ENCODE measurements at regions of chr18 and their contacts with region 1.

Region 1: GRCh38 chr18:3062798-3063680 is 50.1 kb upstream of the LPIN2 start:
- DNase-seq: peak; percentile 83
- H3K4me3 Mint-ChIP-seq: peak overlapping the region; percentile 70
- H3K27ac Mint-ChIP-seq: peak overlapping the region; percentile 91
- H3K4me1 Mint-ChIP-seq: peaks cover 67% of the 10 kb centered on the region
- H3K27me3 Mint-ChIP-seq: no peaks in the 10 kb centered on the region

Region 2: DNA sequence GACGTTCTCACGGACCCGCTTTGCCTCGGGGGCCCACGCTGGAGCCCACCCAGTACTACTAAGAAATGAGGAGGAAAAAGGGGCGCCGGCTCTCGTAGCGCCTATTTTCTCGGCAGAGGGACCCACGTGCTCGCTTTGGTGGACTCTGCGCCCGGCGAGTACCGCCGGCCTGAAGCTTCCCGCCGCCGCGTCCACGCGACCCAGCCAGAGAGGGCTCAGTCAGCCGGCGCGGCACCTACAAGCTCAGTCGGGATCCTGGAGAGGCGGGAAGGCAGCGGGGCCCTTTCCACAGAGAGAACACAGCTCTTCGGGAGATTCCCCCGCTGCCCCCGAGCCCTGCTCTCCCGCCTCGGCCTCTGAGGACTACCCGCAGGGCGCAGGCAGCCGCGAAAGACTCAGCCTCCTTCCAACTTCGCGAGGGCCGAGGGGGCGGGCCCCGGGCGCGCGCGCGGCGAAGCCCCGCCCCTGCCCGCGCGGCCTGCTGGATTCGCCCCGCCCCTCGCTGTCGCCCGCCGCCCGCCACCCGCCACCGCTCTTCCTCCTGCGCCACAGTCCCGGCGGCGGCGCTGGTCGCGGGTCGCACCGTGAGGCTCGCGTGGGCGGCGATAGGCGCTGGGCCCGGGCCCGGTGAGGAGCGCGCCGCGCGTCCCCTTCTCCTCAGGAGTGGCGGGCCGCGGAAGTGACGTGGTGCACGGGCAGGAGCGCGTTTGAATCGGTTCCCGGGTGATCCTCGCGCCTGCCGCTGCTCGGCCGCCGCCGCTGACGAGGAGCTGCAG is 407.7 kb before region 1 on chr18 and contains the start of gene SMCHD1:
- CTCF ChIA-PET with region 1: no interaction called
- POLR2A ChIA-PET with region 1: interaction called, 10 read pairs
- DNase-seq: peak; percentile 87
- H3K4me3 Mint-ChIP-seq: peak within 1 kb of the TSS; percentile 95
- H3K27ac Mint-ChIP-seq: peak within 1 kb of the TSS; percentile 96
- H3K4me1 Mint-ChIP-seq: peaks cover 26% of the 10 kb centered on the region
- H3K27me3 Mint-ChIP-seq: peaks cover 1% of the 10 kb centered on the region
- total RNA-seq, gene SMCHD1: 162 TPM

Region 3: DNA sequence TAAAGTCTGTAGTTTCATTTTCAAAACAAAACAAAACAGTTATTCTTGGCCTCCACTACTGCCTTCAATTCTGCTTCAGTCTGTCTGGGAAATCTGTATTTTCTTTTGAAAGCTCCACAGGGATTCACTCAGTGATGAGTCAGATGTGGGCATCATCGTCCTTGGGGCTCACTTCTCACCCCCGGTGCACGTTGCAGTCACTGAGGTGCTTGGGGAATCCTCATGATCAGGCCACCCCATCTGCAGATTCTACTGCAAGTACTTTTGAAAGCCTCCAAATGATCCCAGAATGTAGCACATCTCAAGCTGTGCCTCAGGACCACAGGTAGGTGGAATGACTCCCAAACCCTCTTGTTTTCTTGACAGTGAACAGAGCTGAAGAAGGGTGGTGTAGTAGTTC is 84.4 kb before region 1 on chr18:
- CTCF ChIA-PET with region 1: interaction called, 94 read pairs
- POLR2A ChIA-PET with region 1: interaction called, 19 read pairs
- DNase-seq: no peak
- H3K4me3 Mint-ChIP-seq: peak overlapping the region; percentile 63
- H3K27ac Mint-ChIP-seq: peak overlapping the region; percentile 78
- H3K4me1 Mint-ChIP-seq: peaks cover 83% of the 10 kb centered on the region
- H3K27me3 Mint-ChIP-seq: no peaks in the 10 kb centered on the region

Region 4: DNA sequence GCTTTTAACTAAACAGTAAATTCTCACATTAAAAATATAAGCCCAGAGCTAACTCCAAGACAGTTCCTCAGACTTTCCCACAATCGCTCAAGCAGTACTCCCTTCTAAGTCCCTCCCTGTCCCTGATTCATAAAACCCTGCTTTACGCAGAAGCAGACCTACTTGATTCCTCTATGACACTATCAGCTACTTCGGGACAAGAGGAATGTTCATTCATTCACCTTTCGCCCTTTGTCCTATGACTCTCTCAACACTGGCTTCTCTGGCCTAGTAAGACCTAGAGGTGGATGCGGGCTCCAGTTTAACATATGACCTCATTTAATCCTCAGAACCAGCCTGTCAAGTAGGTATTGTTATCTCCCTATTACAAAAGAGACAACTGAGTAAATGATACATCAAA is 60.3 kb before region 1 on chr18:
- CTCF ChIA-PET with region 1: interaction called, 65 read pairs
- POLR2A ChIA-PET with region 1: interaction called, 129 read pairs
- DNase-seq: no peak
- H3K4me3 Mint-ChIP-seq: no peak overlapping the region
- H3K27ac Mint-ChIP-seq: no peak overlapping the region
- H3K4me1 Mint-ChIP-seq: peaks cover 54% of the 10 kb centered on the region
- H3K27me3 Mint-ChIP-seq: no peaks in the 10 kb centered on the region

Region 5: DNA sequence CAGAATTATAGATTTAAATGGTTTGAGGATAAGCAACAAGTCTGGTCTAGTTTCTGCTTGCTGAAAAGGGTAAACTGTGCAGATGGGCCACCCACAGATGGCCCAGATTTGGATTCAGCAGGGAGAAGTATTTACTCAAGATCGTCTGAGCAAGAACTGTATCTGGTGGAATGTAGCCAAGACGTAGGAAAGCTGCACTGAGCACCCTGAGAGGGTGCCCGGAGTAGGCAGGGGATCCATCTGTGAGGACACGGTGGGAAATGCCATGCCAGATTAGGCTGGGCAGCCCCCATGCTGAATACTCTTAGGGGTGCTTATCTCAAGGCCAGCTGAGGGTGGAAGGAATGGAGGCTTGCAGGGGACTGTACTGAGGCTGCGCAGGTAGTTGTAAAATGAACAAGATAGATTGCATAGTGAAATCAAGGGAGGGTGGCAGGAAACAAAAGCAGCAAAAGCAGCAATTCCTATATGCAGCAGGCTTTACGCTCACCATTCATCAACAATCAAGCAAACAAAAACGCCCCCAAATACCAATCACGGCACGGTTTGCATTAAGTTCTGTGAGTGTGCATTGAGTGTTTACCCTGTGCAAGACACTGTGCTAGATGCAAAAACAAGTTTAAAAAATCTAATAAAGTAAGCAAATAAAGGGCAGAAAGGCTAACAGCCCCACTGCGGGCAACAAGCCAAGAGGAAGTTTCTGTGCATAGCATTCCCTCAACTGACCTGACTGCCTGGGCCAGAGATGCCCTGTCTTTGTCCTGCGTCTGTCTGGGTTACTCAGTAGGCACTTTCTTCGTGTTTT is 17.9 kb before region 1 on chr18:
- CTCF ChIA-PET with region 1: interaction called, 11 read pairs
- POLR2A ChIA-PET with region 1: interaction called, 17 read pairs
- DNase-seq: no peak
- H3K4me3 Mint-ChIP-seq: no peak overlapping the region
- H3K27ac Mint-ChIP-seq: no peak overlapping the region
- H3K4me1 Mint-ChIP-seq: peaks cover 19% of the 10 kb centered on the region
- H3K27me3 Mint-ChIP-seq: no peaks in the 10 kb centered on the region

Region 6: DNA sequence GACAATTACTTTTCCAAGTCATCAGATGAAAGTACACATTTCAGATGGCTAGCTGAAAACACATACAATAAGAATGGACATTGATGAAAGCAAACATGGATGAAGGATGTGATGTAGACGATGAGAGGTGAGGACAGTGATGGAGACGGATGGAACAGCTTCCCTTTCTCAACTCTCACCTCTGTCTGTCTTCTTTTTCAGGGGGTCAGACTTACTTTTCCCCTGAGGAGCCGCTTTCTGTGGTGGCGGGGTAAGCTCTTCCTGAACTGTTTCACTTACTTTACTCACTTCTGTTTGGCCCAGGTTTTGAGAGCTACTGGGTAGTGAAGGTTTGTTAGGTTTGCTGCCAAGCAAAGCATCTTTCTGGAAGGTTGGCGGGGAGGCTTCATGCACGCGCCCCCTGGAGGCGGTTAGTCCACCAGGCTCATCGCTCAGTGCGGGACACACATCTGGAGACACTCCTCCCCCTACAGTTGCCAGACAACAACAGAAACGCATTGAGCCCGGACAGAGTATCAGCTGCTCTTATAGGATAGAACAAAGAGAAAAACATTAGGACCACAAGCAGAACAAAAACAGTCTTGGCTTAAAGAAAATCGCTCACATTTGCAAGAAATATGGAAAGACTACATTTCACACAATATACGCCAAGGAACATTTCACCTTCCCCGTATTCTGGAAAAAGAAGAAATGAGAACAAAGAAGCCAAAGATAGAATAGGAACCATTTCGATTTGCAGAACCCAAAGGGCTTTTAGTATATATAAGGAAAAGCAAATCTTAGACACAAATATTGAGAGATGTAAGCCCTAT is 66.2 kb after region 1 on chr18:
- CTCF ChIA-PET with region 1: interaction called, 42 read pairs
- POLR2A ChIA-PET with region 1: interaction called, 11 read pairs
- DNase-seq: peak; percentile 84
- H3K4me3 Mint-ChIP-seq: no peak overlapping the region
- H3K27ac Mint-ChIP-seq: no peak overlapping the region
- H3K4me1 Mint-ChIP-seq: peaks cover 9% of the 10 kb centered on the region
- H3K27me3 Mint-ChIP-seq: peaks cover 2% of the 10 kb centered on the region

Region 7: DNA sequence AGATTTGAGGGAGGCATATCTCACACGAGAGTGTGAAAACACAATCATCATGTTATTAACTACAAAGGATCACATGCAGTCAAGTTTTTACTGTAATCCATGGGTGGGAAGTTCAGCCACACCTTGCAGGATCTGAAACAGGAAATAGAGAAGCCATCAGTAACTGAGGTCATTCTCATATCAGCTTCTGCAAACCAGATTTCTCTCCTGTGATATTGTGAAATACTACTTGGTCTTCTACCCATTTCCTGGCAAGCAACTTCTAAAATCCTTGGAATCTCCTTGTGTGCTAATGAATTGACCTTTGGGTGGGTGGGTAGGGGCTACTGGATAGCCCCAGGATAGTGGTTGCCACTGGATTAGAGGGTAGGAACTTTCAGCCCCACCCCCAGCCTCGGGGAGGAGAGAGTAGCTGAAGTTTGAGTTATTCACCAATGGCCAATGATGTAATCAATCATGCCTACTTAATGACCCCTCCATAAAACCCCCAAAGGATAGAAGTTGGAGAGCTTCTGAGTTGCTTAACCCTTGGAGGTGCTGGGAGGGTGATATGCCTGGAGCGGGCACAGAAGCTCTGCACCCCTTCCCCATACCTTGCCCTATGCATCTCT is 361.3 kb after region 1 on chr18:
- CTCF ChIA-PET with region 1: no interaction called
- POLR2A ChIA-PET with region 1: no interaction called
- DNase-seq: no peak
- H3K4me3 Mint-ChIP-seq: no peak overlapping the region
- H3K27ac Mint-ChIP-seq: no peak overlapping the region
- H3K4me1 Mint-ChIP-seq: no peaks in the 10 kb centered on the region
- H3K27me3 Mint-ChIP-seq: no peaks in the 10 kb centered on the region

Measured in activated CD4-positive, alpha-beta memory T cell treated with anti-CD3 and anti-CD28 coated beads, Interleukin-2, amount 10 ng/mL, durations not matched to agents 7 days and 5 days (primary cell).